BJ (cell line): ENCODE measurements at regions of chr15 and their contacts with region 1.

Region 1: GRCh38 chr15:55846116-55846707 is 103.3 kb upstream of the PRTG start:
- DNase-seq: peak; percentile 57
- H3K4me3 ChIP-seq: no peak overlapping the region
- H3K27me3 ChIP-seq: no peaks in the 10 kb centered on the region
- CTCF ChIP-seq: peak; percentile 83

Region 2: GRCh38 chr15:55649054-55649423 is 197.2 kb before region 1 on chr15:
- CTCF ChIA-PET with region 1: interaction called, 40 read pairs
- POLR2A ChIA-PET with region 1: interaction called, 3 read pairs
- DNase-seq: peak; percentile 25
- H3K4me3 ChIP-seq: no peak overlapping the region
- H3K27me3 ChIP-seq: no peaks in the 10 kb centered on the region
- CTCF ChIP-seq: no peak

Region 3: DNA sequence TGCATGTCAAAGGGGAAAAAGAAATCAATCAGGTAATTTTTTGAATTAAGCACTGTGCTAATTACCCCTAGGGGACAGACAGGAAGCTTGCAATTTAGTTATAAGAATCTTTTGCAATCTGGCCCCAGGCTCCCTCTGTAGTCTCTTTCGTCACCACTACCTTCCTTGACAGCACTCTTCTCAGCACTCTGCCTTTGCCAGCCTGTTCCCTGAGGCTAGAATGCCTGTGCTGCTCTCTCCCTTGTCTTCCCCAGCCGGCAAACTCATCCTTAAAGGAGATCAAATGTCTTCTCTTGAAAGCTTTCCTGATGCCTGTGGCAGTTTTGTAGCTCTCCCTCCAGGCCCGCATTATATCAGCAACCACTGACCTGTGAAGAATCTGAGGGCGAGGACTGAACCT is 70.9 kb before region 1 on chr15:
- CTCF ChIA-PET with region 1: no interaction called
- POLR2A ChIA-PET with region 1: no interaction called
- DNase-seq: no peak
- H3K4me3 ChIP-seq: no peak overlapping the region
- H3K27me3 ChIP-seq: peaks cover 2% of the 10 kb centered on the region
- CTCF ChIP-seq: no peak

Region 4: DNA sequence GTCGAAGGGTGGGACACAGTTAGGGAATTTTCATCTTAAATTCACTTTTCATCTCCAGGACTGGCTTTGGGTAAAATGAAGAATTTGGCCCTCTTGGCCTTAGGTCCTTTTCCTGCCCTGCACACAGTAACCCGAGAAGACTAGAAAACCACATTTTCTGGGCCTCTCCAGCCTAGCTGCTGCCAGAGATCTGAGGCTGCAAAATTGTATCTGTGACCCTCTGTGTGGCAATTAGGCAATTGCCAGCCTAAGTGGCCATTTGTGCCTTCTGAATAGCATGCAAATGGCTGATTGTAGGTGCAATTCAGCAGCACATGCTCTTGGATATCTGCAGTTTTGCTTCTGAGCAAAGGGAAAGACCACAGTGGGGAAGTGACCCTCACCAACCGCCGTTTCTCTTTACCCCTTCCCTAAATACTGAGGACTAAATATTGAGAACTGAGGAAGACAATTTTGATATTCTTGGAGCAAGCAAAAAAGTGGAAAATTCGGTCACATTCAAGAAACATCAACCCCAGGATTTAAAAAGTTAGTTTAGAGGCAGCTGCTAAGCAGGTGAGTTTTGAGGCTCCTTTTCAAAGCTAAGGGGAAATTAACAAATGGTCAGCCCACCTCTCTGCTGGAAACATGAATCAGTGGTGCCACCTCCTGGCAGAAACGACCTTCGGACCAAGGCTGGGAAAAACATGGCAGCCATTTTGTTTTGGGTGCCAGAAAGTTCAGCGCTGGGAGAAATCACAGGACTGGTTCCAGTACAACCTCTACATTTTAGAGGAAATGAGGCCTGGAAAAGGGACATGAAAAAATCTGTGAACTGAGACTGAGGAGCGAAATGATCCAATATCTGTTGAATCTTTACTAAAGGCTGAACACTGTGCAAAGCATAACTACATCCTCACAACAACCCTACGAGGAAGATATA is 46.7 kb before region 1 on chr15:
- CTCF ChIA-PET with region 1: interaction called, 10 read pairs
- POLR2A ChIA-PET with region 1: no interaction called
- DNase-seq: no peak
- H3K4me3 ChIP-seq: no peak overlapping the region
- H3K27me3 ChIP-seq: no peaks in the 10 kb centered on the region
- CTCF ChIP-seq: peak; percentile 66

Region 5: GRCh38 chr15:55835866-55836265 is 10.3 kb before region 1 on chr15:
- CTCF ChIA-PET with region 1: interaction called, 19 read pairs
- POLR2A ChIA-PET with region 1: no interaction called
- DNase-seq: no peak
- H3K4me3 ChIP-seq: no peak overlapping the region
- H3K27me3 ChIP-seq: no peaks in the 10 kb centered on the region
- CTCF ChIP-seq: no peak

Region 6: DNA sequence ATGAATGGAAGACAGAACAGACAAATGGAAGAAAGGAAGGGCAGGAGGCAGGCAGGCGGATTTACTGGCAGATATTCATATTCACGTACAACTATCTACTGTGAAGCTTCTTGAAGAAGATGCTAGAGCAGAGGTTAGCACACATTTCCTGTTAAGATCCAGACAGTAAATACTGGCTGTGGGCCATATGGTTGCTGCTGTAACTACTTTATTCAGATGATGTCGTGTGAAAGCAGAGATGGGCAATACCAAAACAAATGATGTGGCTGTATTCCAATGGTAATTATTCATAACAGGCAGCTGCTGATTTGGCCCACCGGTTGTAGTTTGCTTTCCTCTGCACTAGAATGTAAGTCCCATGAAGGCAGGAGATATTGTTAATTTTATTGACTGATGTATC is 12.4 kb after region 1 on chr15:
- CTCF ChIA-PET with region 1: interaction called, 13 read pairs
- POLR2A ChIA-PET with region 1: no interaction called
- DNase-seq: no peak
- H3K4me3 ChIP-seq: no peak overlapping the region
- H3K27me3 ChIP-seq: no peaks in the 10 kb centered on the region
- CTCF ChIP-seq: no peak